Panc1 (cell line): ENCODE measurements at regions of chr16 and their contacts with region 1.

Region 1: GRCh38 chr16:1351582-1352362 is at the starts of genes GNPTG and TSR3:
- DNase-seq: no peak
- ATAC-seq: peak; percentile 84
- H3K4me3 ChIP-seq: peak within 1 kb of the TSS; percentile 86 to 94
- H3K27ac ChIP-seq: peak within 1 kb of the TSS; percentile 78
- H3K4me1 ChIP-seq: peaks cover 22% of the 10 kb centered on the region
- H3K27me3 ChIP-seq: no peaks in the 10 kb centered on the region
- CTCF ChIP-seq: no peak
- total RNA-seq, gene GNPTG: 62.5 TPM
- total RNA-seq, gene TSR3: 89.7 TPM

Region 2: DNA sequence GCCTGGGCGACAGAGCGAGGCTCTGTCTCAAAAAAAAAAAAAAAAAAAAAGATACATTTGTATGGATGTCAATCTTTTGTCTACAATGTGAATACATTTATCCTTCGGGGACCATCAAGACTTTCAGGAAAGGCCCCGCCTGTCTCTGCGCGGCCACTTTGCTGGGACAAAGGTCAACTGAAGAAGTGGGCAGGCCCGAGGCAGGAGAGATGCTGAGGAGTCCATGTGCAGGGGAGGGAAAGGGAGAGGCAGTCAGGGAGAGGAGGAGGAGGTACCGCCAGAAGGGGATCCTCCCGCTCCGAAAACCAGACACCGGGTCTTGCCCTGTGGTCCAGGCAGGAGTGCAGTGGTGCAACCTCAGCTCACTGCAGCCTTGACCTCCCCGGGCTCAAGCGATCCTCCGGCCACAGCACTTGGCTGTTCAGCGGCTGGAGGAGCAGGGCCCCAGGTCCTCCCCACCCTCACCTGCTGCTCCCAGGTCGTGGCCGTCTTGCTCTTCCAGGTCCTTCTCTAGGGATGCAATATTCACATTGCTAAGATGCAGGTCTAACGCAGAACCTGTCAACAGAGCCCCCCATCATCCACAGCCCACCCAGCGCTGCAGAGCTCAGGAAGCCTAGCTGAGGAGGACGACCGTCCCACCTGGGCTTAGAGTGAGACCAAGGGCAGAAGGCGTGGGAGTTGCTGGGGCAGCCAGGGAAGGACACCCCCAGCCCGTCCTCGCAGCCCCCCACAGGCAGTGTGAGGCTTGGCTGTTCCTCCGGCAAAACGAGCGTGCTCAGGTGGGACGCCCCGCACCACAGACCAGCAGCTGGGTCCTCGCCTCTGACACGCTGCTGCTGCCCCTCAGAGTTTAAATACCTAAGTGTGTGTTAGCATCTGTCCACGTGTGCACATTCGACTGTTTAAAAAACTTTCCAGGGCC is 19.5 kb after region 1 on chr16:
- CTCF ChIA-PET with region 1: no interaction called
- POLR2A ChIA-PET with region 1: interaction called, 14 read pairs
- in situ Hi-C with region 1: no loop called
- intact Hi-C with region 1: no loop called
- DNase-seq: no peak
- ATAC-seq: no peak
- H3K4me3 ChIP-seq: no peak overlapping the region
- H3K27ac ChIP-seq: no peak overlapping the region
- H3K4me1 ChIP-seq: no peaks in the 10 kb centered on the region; the same call in 1 of the 2 replicates
- H3K27me3 ChIP-seq: no peaks in the 10 kb centered on the region
- CTCF ChIP-seq: no peak

Region 3: DNA sequence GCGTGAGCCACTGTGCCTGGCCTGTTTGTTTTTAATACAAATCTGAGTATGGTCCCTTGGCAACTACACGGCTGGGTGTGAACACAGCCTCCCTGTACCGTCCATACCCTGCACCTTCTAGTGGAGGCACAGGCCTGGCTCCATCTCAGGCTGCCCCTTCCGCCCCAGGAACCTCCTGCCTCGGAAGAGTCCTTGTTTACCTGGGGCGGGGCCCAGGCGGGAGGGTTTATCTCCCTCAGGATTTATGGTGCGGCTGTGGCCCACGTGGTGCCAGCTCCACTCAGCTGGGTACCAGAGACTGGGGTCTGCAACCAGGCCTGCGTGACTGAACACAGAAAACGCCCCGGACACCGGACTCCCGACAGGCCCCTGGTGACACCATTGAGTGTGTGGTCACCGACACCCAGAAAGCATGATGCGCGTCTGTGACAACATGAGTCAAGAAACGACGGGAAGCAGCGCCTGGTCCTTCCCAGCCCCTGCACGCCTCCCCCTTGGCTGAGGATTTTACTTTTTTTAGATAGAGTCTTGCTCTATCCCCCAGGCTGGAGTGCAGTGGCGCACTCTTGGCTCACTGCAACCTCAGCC is 43.8 kb after region 1 on chr16:
- CTCF ChIA-PET with region 1: no interaction called
- POLR2A ChIA-PET with region 1: no interaction called
- in situ Hi-C with region 1: no loop called
- intact Hi-C with region 1: no loop called
- DNase-seq: no peak
- ATAC-seq: no peak
- H3K4me3 ChIP-seq: no peak overlapping the region
- H3K27ac ChIP-seq: no peak overlapping the region
- H3K4me1 ChIP-seq: no peaks in the 10 kb centered on the region
- H3K27me3 ChIP-seq: no peaks in the 10 kb centered on the region
- CTCF ChIP-seq: no peak

Region 4: DNA sequence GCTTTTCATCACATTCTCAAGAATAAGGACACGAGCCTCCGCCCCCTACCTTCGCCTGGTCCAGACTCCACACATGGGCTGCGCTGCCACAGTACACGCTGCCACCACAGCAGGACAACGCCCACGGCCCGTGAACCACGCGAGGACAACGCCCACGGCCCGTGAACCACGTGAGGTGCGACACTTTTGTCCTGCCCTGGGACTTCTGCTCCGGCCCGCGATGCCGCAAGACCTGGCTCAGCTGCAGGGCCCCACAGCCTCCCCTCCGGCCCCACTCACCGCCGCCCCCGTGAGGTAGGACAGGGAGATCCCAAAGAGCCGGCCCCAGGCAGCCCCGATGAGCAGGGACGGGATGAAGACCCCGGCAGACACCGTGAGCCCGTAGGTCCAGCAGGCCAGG is 98.4 kb after region 1 on chr16:
- CTCF ChIA-PET with region 1: no interaction called
- POLR2A ChIA-PET with region 1: no interaction called
- in situ Hi-C with region 1: no loop called
- intact Hi-C with region 1: no loop called
- DNase-seq: no peak
- ATAC-seq: no peak
- H3K4me3 ChIP-seq: no peak overlapping the region
- H3K27ac ChIP-seq: no peak overlapping the region
- H3K4me1 ChIP-seq: no peaks in the 10 kb centered on the region
- H3K27me3 ChIP-seq: no peaks in the 10 kb centered on the region
- CTCF ChIP-seq: no peak; the same call in 1 of the 2 replicates